ENCODE measurements at regions of chr10 and their contacts with region 1.

Region 1: GRCh38 chr10:90652519-90652918 is 205.3 kb downstream of the HTR7 start:
- DNase-seq: no peak
- H3K4me3 ChIP-seq: no peak overlapping the region
- H3K27ac ChIP-seq: no peak overlapping the region
- H3K4me1 ChIP-seq: no peaks in the 10 kb centered on the region
- H3K27me3 ChIP-seq: no peaks in the 10 kb centered on the region
- CTCF ChIP-seq: peak in 2 of 3 experiments; percentile 56 to 62; a peak in 3 of 4 replicates
- EP300 ChIP-seq: no peak
- POLR2A ChIP-seq: no peak
- RAD21 ChIP-seq: peak; percentile 73 to 79

Region 2: DNA sequence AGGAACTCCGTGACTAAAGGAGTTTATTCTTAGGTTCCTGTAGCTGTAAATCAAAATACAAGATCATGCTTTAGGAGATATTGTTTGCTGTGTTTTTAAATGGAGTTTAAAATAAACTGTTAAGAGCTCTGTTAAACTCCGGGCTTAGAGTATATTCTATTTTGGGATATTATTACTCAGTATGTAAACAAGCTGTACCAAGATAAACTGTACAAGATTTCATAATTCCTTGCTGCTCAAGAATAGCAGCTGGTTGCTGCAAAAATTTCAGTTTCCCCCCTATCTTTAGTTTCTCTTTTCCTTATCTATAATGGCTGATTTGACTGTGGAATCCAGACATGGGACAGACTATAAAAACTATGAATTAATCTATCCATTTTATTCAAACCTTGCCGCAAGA is 10.4 kb before region 1 on chr10:
- CTCF ChIA-PET with region 1: interaction called, 10 read pairs
- POLR2A ChIA-PET with region 1: no interaction called
- DNase-seq: no peak
- H3K4me3 ChIP-seq: no peak overlapping the region
- H3K27ac ChIP-seq: no peak overlapping the region
- H3K4me1 ChIP-seq: no peaks in the 10 kb centered on the region
- H3K27me3 ChIP-seq: no peaks in the 10 kb centered on the region
- CTCF ChIP-seq: no peak
- EP300 ChIP-seq: no peak
- POLR2A ChIP-seq: no peak
- RAD21 ChIP-seq: no peak

Region 3: DNA sequence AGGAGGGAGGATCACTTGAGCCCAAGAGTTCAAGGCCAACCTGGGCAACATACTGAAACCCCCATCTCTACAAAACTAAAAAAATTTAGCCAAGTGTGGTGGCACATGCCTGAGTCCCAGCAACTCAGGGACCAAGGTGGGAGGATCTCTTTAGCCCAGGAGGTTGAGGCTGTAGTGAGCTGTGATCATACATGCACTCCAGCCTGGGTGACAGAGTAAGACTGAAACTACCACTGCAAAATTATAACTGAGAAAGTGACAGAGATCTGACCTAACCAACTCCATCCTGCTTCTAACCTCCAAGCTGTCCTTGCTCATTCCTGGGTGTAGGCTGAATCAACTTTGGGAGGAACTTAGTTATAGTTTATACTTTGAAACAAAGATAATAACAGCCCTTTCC is 146.0 kb after region 1 on chr10:
- CTCF ChIA-PET with region 1: no interaction called
- POLR2A ChIA-PET with region 1: no interaction called
- DNase-seq: no peak
- H3K4me3 ChIP-seq: no peak overlapping the region
- H3K27ac ChIP-seq: no peak overlapping the region
- H3K4me1 ChIP-seq: peaks cover 0 to 2% (median 0%) of the 10 kb centered on the region in 4 experiments; a peak in 1 of 7 replicates
- H3K27me3 ChIP-seq: 0 out of 7 replicates have a peak, but pooled peaks cover 0 to under 1% (median 0%) of the 10 kb centered on the region in 4 experiments
- CTCF ChIP-seq: no peak
- EP300 ChIP-seq: no peak
- POLR2A ChIP-seq: no peak
- RAD21 ChIP-seq: no peak